ENCODE measurements at regions of chr2 and their contacts with region 1.

Region 1: DNA sequence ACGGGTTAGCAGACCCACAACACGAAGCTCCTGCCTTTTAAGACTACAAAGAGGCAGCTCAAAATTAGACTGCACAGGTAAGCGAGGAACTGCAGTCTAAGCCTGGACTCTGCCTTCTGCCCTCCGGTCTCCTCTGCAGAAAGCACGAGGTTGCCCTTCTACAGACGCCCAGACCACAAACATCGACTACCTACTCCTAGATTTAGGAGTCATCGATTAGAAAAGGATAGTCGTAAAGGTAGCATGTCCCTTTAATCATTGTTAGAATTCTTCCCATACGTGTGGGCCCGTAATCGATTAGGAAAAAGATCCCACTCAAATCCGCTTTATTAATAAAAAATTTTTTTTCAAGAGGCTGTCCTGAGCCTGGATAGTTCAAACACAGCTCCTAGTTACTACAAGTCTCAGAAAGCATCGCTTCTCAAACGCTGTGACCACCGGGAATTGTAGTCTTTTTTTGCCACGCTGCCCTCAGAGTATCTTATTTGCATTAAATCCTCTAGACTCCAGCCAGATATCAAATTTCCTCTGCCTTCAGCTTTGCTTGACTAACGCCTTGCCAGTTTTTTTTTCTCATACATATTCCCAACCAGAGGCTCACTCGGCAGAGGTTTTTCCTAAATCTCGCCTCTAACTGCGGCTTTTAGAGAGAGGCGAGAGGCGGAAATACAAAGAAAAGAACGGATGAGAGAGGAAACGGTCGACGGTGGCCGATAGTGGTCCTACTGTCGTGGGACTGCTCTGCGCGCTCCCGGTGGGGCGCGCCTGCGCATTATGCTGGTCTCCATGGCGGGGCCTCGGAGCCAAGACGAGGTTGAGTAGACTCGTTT is at the starts of genes CARF and WDR12:
- DNase-seq: peak; percentile 96
- total RNA-seq, gene CARF: 9.0 TPM
- total RNA-seq, gene WDR12: 31.0 TPM

Region 2: GRCh38 chr2:202442882-202443281 is 468.8 kb before region 1 on chr2:
- intact Hi-C with region 1: no loop called
- DNase-seq: no peak

Region 3: GRCh38 chr2:202634556-202635427 is 276.9 kb before region 1 on chr2 and contains the start of gene FAM117B:
- intact Hi-C with region 1: loop called (anchors 10 kb)
- DNase-seq: peak; percentile 98
- total RNA-seq, gene FAM117B: 1.2 TPM

Region 4: DNA sequence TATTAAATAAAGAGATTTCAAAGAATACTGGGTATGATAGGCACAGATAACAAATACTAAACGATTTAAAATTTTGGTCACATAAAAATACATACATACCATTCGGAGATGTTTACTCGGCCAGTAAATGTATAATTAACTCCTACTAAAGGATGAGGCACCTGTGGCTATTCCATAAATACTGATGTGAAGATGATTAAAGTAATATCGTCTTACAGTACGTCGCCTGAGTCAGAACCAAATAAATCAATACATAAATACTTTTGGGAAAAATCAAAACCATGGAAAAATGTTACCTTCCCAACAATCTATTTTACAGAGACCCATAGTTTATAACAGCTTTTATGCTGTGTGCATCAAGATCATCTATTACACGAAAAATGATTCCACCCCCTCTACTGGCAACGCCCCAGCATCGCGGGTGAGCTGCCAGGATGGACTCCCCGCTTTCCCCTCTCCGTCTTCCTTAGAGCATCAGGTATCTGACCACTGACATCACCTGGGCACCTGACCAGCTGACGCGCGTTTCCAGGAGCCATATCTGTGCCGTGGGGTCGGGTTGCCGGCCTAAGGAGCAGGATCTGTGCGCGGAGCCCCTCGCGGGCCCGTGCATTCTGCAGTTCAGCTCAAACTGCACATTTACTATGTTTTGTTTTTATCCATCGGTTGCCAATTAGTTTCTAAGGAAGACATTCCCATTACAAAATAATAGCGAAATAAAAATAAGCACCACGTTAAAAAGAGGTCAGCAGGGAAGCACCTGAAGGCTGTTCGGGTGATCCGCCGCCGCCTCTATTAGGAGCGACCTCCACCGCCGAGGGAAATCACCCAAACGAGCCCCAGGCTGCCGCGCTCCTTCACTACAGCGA is 41.1 kb before region 1 on chr2:
- intact Hi-C with region 1: loop called (anchors 5 kb)
- DNase-seq: no peak

Region 5: DNA sequence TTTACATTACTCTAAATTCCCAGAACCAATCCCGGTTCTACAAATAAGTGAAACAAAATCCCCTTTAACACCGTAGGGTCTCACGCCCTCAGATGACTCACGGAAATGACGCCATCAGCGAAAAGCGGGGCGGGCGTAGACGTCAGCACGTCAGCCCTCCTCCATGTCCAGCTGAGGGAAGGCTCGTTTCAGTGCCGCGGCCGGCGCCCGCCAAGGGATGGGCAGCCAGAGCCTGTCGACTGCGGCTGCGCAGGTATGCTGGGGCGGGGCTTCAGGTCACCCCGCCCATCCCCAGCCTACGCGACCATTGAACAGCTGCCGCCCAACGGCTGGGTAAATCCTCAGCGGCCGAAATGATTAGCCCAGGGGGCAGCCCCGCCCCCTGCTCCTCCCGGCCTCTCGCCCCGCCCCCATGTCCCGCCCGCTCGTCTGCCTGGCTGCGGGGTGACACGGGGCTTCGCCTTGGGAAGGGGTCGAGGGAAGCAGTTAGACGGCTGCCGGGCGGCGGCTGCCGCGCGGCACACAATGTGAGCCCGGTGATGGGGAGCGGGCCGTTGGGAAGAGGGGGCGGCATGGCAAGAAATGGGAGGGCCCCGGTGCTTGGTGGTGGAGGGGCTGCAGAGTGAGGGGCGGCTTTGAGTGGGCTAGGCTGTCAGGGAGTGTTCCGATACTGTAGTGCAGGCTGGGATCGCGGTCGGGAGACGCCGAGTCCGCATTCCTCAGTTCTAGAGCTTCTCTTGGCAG is 102.9 kb after region 1 on chr2 and contains the start of gene NBEAL1:
- intact Hi-C with region 1: loop called (anchors 2 kb)
- DNase-seq: peak; percentile 100
- total RNA-seq, gene NBEAL1: 28.7 TPM